ENCODE measurements at regions of chr1 and their contacts with region 1.

Region 1: GRCh38 chr1:151443846-151444782 is 15.2 kb downstream of the POGZ start:
- DNase-seq: peak; percentile 18 to 56
- ATAC-seq: peak; percentile 89 to 94
- H3K4me3 ChIP-seq: no peak overlapping the region
- H3K27ac ChIP-seq: peak overlapping the region; percentile 19 to 63 (median 46)
- H3K4me1 ChIP-seq: peaks cover 33 to 56% of the 10 kb centered on the region in 2 donors
- H3K27me3 ChIP-seq: no peaks in the 10 kb centered on the region
- CTCF ChIP-seq: peak; percentile 45 to 79 (median 57)
- POLR2A ChIP-seq: no peak

Region 2: DNA sequence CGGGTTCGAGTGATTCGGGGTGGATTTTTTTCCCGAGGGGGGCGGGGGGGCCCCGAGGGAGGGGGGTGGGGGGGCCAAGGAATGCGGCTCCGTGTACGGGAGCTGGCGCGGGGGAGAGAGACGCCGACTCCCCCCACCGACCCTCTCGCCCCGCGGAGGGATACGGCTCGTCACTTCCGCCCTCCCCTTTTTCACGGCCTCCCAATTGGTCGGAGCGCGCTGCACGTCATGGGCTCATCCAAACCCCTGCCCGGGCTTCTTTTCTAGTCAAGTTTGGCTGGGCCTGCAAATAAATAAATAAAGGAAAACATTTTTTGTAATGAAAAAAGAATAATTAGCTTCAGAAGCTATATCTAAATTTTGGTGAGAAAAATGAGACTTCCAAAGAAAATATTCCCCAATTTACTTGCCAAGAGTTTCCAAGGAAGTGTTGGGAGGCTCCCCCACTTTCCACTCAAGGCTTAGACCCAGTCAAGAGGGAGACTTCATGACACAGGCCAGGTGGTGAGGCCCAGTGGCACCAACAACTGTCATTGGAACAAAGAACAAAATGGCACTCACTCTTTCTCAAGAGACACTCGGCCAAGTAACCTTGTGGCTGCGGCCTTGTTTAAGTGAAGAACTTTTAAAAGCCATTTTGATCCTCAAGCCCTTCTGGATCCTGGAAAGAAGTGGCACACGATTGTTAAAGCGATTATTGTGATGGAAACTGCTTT is 15.4 kb after region 1 on chr1 and contains the start of gene POGZ:
- in situ Hi-C with region 1: no loop called
- intact Hi-C with region 1: loop called (anchors 1 kb)
- DNase-seq: peak; percentile 91 to 95
- ATAC-seq: peak; percentile 82 to 83
- H3K4me3 ChIP-seq: peak within 1 kb of the TSS; percentile 76 to 97 (median 84)
- H3K27ac ChIP-seq: peak within 1 kb of the TSS; percentile 87 to 98 (median 96)
- H3K4me1 ChIP-seq: peaks cover 11 to 16% of the 10 kb centered on the region in 2 donors
- H3K27me3 ChIP-seq: peaks cover 0 to 2% (median 0%) of the 10 kb centered on the region in 3 donors
- CTCF ChIP-seq: no peak
- POLR2A ChIP-seq: peak; percentile 37 to 39
- total RNA-seq, gene POGZ: 14.1 to 20.2 (median 15.1) TPM

Region 3: DNA sequence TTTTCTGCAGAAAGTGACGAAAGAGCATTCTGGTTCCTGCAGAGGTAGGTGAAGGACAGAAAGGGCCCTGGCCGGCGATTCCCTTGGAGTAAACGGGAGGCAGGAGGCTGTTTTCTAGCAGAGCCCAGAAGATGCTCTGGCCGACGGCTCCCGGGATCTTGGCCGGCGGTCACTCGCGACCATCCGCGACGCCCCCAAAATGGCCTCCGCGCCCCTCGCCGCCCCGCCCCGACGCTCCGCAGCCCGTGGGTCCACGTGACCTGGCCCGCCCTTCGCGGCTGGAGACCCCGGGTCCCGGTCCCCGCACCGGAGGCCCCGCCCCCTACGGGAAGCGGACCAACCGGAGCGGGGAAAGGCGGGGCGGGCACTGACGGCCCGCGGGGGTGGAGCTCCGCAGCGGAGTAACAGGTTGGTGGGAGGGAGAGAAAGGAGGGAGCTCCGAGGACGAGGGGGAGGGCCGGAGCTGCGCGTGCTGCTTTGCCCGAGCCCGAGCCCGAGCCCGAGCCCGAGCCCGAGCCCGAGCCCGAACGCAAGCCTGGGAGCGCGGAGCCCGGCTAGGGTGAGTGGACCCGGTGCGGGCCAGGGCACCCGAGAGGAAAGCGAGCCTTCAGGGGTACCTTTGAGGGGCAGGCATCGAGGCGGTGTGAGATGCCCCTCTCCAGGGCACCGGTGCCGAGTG is 67.0 kb after region 1 on chr1 and contains the start of gene CGN:
- in situ Hi-C with region 1: no loop called
- intact Hi-C with region 1: loop called (anchors 5 kb)
- DNase-seq: peak; percentile 50 to 51
- ATAC-seq: peak; percentile 83 to 86
- H3K4me3 ChIP-seq: peak within 1 kb of the TSS; percentile 60 to 80 (median 63)
- H3K27ac ChIP-seq: no peak within 1 kb of the TSS
- H3K4me1 ChIP-seq: peaks cover 8 to 13% of the 10 kb centered on the region in 2 donors
- H3K27me3 ChIP-seq: peaks cover 11 to 32% (median 16%) of the 10 kb centered on the region in 3 donors
- CTCF ChIP-seq: no peak
- POLR2A ChIP-seq: no peak
- total RNA-seq, gene CGN: 0.34 to 0.78 TPM in 2 of 4 donors, not detected in the others

Region 4: GRCh38 chr1:151539990-151540981 is 96.2 kb after region 1 on chr1 and contains the start of gene TUFT1:
- in situ Hi-C with region 1: loop called in 1 of 4 experiments (anchors 25 kb)
- intact Hi-C with region 1: loop called (anchors 1 kb)
- DNase-seq: peak; percentile 86 to 89
- ATAC-seq: peak; percentile 94 to 96
- H3K4me3 ChIP-seq: peak within 1 kb of the TSS; percentile 65 to 84 (median 72)
- H3K27ac ChIP-seq: peak within 1 kb of the TSS; percentile 61 to 76 (median 72)
- H3K4me1 ChIP-seq: peaks cover 4 to 19% of the 10 kb centered on the region in 2 donors
- H3K27me3 ChIP-seq: no peaks in the 10 kb centered on the region
- CTCF ChIP-seq: no peak
- POLR2A ChIP-seq: peak; percentile 86 to 96
- total RNA-seq, gene TUFT1: 1.2 to 4.0 (median 2.7) TPM

Region 5: DNA sequence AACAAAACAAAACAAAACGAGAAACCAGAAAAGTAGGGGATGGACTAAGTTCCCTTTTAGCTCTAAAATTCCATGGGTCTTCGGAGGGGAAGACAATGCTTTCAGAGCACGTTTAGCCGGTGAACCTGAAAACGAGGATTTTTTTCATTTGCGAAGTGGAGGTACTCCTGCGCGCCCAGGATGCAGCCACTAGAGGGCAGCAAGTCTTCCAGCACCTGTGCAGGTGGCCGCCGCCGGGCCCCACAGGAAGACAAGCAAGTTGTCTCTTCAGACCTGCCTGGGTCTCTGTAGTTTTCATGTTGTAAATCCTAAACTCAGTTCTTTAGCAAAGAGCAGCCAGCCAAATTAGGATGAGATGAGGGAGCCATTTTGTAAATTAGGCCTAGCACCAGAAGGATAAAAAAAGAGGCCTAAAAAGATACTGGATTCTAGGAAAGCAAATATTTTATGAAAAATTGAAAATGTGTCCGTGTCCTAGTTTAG is 150.1 kb after region 1 on chr1:
- in situ Hi-C with region 1: no loop called
- intact Hi-C with region 1: loop called (anchors 2 kb)
- DNase-seq: peak; percentile 50 to 70
- ATAC-seq: peak; percentile 65 to 81
- H3K4me3 ChIP-seq: no peak overlapping the region
- H3K27ac ChIP-seq: no peak overlapping the region
- H3K4me1 ChIP-seq: peaks cover 0 to 7% of the 10 kb centered on the region in 2 donors
- H3K27me3 ChIP-seq: no peaks in the 10 kb centered on the region
- CTCF ChIP-seq: peak; percentile 82 to 96 (median 84)
- POLR2A ChIP-seq: no peak

Region 6: GRCh38 chr1:151728151-151729054 is 284.3 kb after region 1 on chr1:
- in situ Hi-C with region 1: loop called in 3 of 4 experiments (anchors 10 to 25 kb)
- intact Hi-C with region 1: no loop called
- DNase-seq: no peak
- ATAC-seq: no peak
- H3K4me3 ChIP-seq: no peak overlapping the region
- H3K27ac ChIP-seq: no peak overlapping the region
- H3K4me1 ChIP-seq: peaks cover 8 to 12% of the 10 kb centered on the region in 2 donors
- H3K27me3 ChIP-seq: no peaks in the 10 kb centered on the region
- CTCF ChIP-seq: no peak
- POLR2A ChIP-seq: no peak

Region 7: GRCh38 chr1:151739590-151740375 is 295.7 kb after region 1 on chr1:
- in situ Hi-C with region 1: loop called in 3 of 4 experiments (anchors 10 to 25 kb)
- intact Hi-C with region 1: loop called (anchors 1 kb)
- DNase-seq: no peak
- ATAC-seq: no peak
- H3K4me3 ChIP-seq: no peak overlapping the region
- H3K27ac ChIP-seq: no peak overlapping the region
- H3K4me1 ChIP-seq: peaks cover 4 to 5% of the 10 kb centered on the region in 2 donors
- H3K27me3 ChIP-seq: no peaks in the 10 kb centered on the region
- CTCF ChIP-seq: no peak
- POLR2A ChIP-seq: no peak